GM10248 (cell line): ENCODE measurements at regions of chr3 and their contacts with region 1.

Region 1: DNA sequence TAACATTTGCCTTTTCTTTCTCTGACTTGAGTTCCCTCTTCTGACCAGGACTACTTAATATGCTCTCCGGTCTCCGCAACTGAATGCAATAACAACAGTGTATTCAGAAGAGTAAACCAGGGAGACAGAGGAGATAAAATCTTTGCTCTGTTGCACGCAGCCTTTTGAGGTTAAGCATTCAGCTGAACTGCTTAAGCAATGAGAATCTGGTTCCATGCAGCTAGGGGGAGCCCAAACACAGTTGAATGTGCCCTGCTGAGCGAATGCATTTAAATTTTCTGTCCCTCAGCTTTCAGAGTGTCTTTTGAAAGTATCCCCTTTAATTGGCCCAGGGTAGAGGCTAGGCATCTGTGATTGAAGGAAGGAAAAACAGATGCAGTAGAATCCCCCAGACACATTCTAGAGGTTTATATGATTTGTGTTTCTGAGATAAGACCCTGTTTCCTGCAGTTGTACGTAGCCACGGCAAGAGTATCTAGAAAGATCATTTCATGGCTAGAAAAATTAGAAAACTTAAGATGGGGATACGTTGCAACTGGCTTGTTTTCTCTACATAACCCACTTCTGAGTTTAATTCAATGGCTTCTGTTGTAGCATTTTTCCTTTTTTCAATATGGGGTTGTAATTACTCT is 309.6 kb downstream of the TUSC7 start:
- DNase-seq: peak; percentile 26
- CTCF ChIP-seq: peak; percentile 78

Region 2: GRCh38 chr3:117035745-117036144 is 16.5 kb after region 1 on chr3:
- CTCF ChIA-PET with region 1: interaction called, 14 read pairs
- POLR2A ChIA-PET with region 1: no interaction called
- DNase-seq: no peak
- CTCF ChIP-seq: no peak

Region 3: GRCh38 chr3:117322866-117323265 is 303.7 kb after region 1 on chr3:
- CTCF ChIA-PET with region 1: no interaction called
- POLR2A ChIA-PET with region 1: no interaction called
- DNase-seq: peak; percentile 3
- CTCF ChIP-seq: no peak

Region 4: GRCh38 chr3:117526470-117527079 is 507.4 kb after region 1 on chr3:
- CTCF ChIA-PET with region 1: interaction called, 15 read pairs
- POLR2A ChIA-PET with region 1: no interaction called
- DNase-seq: peak; percentile 5
- CTCF ChIP-seq: peak; percentile 51